Esophagus muscularis mucosa (tissue), 4 donors: ENCODE measurements at regions of chr12 and their contacts with region 1.

Region 1: DNA sequence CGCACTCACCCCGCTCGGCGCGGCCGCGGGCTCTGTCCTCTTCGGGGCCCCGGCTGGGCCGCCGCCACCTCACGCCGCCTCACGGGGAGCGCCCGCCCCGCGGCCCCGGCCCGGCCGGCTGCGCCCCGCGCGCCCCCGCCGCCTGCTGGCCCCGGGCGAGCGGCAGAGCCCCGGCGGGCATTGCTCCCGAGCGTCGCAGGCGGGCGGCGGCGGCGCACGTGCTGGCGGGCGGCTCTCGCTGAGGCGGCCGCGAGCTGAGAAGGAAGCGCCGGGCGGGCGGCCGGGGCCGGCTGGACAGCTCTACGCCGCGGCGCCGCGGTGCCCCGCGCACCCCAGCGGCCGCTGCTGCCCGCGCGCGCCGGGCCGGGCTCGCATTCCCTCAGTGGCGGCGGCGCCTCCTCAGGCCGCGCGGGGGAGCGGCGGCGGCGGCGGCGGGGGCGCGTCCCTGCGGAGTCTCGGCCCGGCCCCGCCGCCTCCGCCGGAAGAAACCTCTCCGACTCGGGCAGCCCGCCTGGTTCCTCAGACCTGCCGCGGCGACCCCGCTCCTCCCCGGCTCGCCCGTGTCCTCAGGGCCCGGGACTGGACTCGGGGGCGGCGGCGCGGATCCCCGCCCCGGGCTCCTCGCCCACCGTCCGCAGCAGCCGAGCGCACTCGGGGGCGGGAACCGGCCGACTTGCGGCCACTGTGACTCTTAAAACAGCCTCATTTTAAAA is at the start of gene PITPNM2:
- DNase-seq: no peak
- H3K4me3 ChIP-seq: peak within 1 kb of the TSS; percentile 68 to 88 (median 82)
- H3K27ac ChIP-seq: peak within 1 kb of the TSS; percentile 86 to 94 (median 91)
- H3K4me1 ChIP-seq: peaks cover 19 to 51% (median 34%) of the 10 kb centered on the region in 4 donors
- H3K27me3 ChIP-seq: no peaks in the 10 kb centered on the region
- CTCF ChIP-seq: peak; percentile 12 to 47 (median 47)
- EP300 ChIP-seq: no peak
- POLR2A ChIP-seq: no peak
- total RNA-seq, gene PITPNM2: 10.4 to 24.4 (median 13.3) TPM

Region 2: DNA sequence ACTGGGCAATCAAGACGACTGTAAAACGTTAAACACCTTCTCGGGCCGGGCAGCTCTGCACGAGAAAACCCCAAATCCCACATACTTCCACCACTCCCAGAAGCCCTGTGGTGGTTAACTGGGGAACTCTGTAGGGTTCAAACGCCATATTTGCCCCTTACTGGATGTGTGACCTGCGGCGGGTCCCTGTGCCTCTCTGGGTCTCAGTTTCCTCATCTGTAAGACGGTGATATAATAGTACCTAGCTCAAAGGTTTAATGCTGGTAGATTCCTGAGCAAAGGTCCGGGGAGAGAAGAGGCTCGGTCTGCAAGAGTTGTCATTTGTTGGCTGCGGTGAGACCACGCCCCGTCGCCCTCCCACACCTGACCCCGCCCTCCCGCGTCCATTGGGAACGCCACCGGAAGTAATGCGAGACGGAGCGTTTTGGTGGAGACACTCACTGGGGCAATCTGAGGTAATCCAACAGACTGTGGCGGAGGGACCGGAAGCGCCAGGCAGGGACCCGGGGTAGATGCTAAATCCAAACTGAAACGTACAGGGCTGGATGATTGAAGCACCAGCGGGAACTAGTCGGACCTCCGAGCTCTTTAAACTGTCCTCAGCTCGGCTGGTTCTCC is 176.5 kb before region 1 on chr12:
- intact Hi-C with region 1: loop called (anchors 10 kb)
- DNase-seq: peak; percentile 100
- H3K4me3 ChIP-seq: peak overlapping the region; percentile 82 to 92 (median 87)
- H3K27ac ChIP-seq: peak overlapping the region; percentile 90 to 98 (median 97)
- H3K4me1 ChIP-seq: peaks cover 27 to 48% (median 41%) of the 10 kb centered on the region in 4 donors
- H3K27me3 ChIP-seq: no peaks in the 10 kb centered on the region
- CTCF ChIP-seq: no peak
- EP300 ChIP-seq: no peak
- POLR2A ChIP-seq: no peak

Region 3: GRCh38 chr12:123043536-123044001 is 107.3 kb before region 1 on chr12:
- intact Hi-C with region 1: loop called (anchors 1 kb)
- DNase-seq: no peak
- H3K4me3 ChIP-seq: no peak overlapping the region
- H3K27ac ChIP-seq: peak overlapping the region; percentile 68 to 79 (median 76)
- H3K4me1 ChIP-seq: peaks cover 29 to 70% (median 48%) of the 10 kb centered on the region in 4 donors
- H3K27me3 ChIP-seq: no peaks in the 10 kb centered on the region
- CTCF ChIP-seq: peak; percentile 79 to 86 (median 81)
- EP300 ChIP-seq: no peak
- POLR2A ChIP-seq: no peak

Region 4: DNA sequence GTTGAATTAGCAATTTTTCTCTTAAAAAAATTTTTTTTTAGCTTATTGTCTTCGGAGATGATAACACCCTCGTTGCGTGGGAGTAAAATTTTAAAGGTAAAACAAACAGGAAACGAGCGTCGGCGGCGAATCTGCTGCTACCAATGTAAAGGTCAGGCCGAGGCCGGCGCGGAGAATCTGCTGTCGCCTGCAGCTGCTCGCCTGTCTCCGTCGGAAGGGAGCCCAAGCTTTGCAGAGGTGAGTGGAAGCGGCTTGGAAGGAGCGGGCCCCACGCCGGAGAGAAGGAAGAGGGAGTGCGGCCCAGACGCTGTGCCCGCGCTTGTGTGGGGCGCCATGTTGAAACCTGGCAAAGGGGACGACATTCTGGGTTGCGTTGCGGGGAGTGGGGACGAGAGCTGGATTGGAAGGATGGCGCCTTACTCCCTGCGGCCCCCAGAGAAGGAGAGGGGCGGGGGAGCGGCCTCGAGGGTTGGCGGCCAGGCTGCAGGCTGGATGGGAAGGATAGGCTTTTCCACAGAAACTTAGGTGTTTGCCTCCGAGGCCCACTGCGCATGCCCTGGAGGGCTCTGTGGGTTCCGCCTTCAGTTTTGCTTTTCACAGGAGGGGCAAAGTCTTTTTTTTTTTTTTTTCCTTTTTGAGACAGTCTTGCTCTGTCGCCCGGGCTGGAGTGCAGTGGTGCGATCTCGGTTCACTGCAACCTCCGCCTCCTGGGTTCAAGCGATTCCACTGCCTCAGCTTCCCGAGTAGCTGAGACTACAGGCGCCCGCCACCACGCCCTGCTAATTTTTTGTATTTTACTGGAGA is 307.3 kb after region 1 on chr12 and contains the start of gene SNRNP35:
- intact Hi-C with region 1: no loop called
- DNase-seq: peak; percentile 95
- H3K4me3 ChIP-seq: peak within 1 kb of the TSS; percentile 91 to 98 (median 96)
- H3K27ac ChIP-seq: peak within 1 kb of the TSS; percentile 98 to 100 (median 100)
- H3K4me1 ChIP-seq: peaks cover 16 to 24% (median 20%) of the 10 kb centered on the region in 4 donors
- H3K27me3 ChIP-seq: no peaks in the 10 kb centered on the region
- CTCF ChIP-seq: no peak
- EP300 ChIP-seq: no peak
- POLR2A ChIP-seq: no peak
- total RNA-seq, gene SNRNP35: 11.6 to 27.4 (median 17.0) TPM